CD14-positive monocyte (primary cell): ENCODE measurements at regions of chr3 and their contacts with region 1.

Region 1: DNA sequence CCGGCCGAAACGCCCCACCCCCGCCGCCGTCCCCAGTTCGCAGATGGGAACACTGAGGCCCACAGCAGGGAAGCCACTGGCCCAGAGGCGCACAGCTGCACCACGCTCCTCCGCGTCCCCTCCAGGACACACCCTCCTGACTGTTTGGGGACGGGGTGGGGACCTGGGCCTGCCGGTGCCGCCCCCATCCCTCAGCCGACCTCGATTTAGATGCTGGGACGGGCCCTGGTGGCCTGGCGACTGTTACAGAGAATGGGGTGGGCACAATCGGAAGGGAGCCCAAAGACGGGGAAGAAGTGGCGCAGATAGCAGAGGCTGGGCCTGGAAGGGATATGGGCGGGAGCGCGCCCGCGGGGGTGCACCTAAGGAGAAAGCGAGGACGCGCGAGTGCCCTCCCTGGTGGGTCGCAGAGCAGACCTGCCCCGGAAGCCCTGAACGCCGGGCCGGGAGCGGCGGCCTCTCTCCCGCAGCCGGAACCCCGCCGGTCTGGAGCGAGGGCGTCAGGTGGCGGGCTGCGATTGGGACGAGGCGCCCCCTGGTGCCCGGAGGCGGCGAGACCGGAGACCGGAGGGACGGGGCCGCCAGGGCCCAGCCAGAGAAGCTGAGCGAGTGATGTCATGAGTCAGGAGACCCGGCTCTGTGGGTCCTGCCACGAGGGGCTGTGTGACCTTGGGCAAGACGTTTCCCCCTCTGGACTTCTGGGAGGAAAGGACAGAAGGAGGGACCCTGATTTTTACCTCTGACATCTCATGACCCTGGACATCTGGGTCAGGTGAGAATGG is 78.4 kb downstream of the IQSEC1 start:
- DNase-seq: peak; percentile 77 to 86 (median 80)
- H3K4me3 ChIP-seq: peak overlapping the region; percentile 51 to 91 (median 67)
- H3K4me3 Mint-ChIP-seq: peak overlapping the region; percentile 93 to 95
- H3K27ac ChIP-seq: peak overlapping the region in 1 of 2 donors; percentile 66
- H3K27ac Mint-ChIP-seq: peak overlapping the region; percentile 70 to 91 (median 86)
- H3K4me1 ChIP-seq: peaks cover 65 to 79% of the 10 kb centered on the region in 2 donors
- H3K4me1 Mint-ChIP-seq: peaks cover 81% of the 10 kb centered on the region
- H3K27me3 ChIP-seq: peaks cover 0 to 11% of the 10 kb centered on the region in 2 donors
- H3K27me3 Mint-ChIP-seq: peaks cover 10 to 23% (median 23%) of the 10 kb centered on the region in 3 donors
- CTCF ChIP-seq: peak; percentile 99

Region 2: GRCh38 chr3:12268049-12268735 is 726.6 kb before region 1 on chr3:
- intact Hi-C with region 1: no loop called
- DNase-seq: peak in 2 of 3 donors; percentile 33 to 44
- H3K4me3 ChIP-seq: no peak overlapping the region
- H3K4me3 Mint-ChIP-seq: no peak overlapping the region
- H3K27ac ChIP-seq: peak overlapping the region in 1 of 2 donors; percentile 29
- H3K27ac Mint-ChIP-seq: peak overlapping the region in 3 of 7 donors; percentile 30 to 59 (median 30)
- H3K4me1 ChIP-seq: peaks cover 39 to 60% of the 10 kb centered on the region in 2 donors
- H3K4me1 Mint-ChIP-seq: peaks cover 46% of the 10 kb centered on the region
- H3K27me3 ChIP-seq: no peaks in the 10 kb centered on the region
- H3K27me3 Mint-ChIP-seq: peaks cover 0 to 1% (median 0%) of the 10 kb centered on the region in 3 donors
- CTCF ChIP-seq: no peak

Region 3: DNA sequence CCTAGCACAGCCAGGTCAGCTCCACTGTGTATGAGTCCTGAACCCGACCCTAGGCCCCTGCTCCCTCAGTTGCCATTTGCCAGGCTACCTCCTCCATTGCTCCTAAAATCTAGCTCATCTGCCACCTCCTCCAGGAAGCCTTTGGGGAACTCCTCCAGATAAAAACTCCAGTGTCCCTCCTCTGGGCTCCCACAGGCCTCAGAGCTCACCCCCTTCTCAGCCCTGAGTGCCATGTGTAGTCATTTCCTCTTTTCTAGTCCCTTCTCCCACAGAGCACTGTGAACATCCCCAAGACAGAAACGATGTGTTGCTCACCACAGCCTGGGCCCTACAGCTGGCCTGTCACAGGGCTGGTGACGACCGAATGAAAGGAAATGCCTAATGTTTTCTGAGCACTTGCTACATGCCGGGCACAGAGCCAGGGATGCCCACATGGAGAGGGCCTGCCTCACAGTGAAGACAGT is 17.5 kb after region 1 on chr3:
- intact Hi-C with region 1: loop called (anchors 1 to 2 kb)
- DNase-seq: peak; percentile 98 to 100 (median 98)
- H3K4me3 ChIP-seq: peak overlapping the region in 2 of 3 experiments; percentile 85 to 94
- H3K4me3 Mint-ChIP-seq: peak overlapping the region; percentile 86 to 95
- H3K27ac ChIP-seq: peak overlapping the region; percentile 98 to 100
- H3K27ac Mint-ChIP-seq: peak overlapping the region; percentile 99 to 100 (median 100)
- H3K4me1 ChIP-seq: peaks cover 95 to 100% of the 10 kb centered on the region in 2 donors
- H3K4me1 Mint-ChIP-seq: peaks cover 80% of the 10 kb centered on the region
- H3K27me3 ChIP-seq: no peaks in the 10 kb centered on the region
- H3K27me3 Mint-ChIP-seq: peaks cover 0 to 7% (median 0%) of the 10 kb centered on the region in 3 donors
- CTCF ChIP-seq: no peak

Region 4: GRCh38 chr3:13045904-13046568 is 51.2 kb after region 1 on chr3:
- intact Hi-C with region 1: loop called in 1 of 2 experiments (anchors 10 kb)
- DNase-seq: peak; percentile 81 to 88 (median 86)
- H3K4me3 ChIP-seq: peak overlapping the region in 1 of 3 experiments; percentile 12
- H3K4me3 Mint-ChIP-seq: peak overlapping the region in 1 of 2 donors; percentile 64
- H3K27ac ChIP-seq: peak overlapping the region; percentile 64 to 71
- H3K27ac Mint-ChIP-seq: peak overlapping the region; percentile 87 to 97 (median 94)
- H3K4me1 ChIP-seq: peaks cover 26 to 27% of the 10 kb centered on the region in 2 donors
- H3K4me1 Mint-ChIP-seq: peaks cover 30% of the 10 kb centered on the region
- H3K27me3 ChIP-seq: no peaks in the 10 kb centered on the region
- H3K27me3 Mint-ChIP-seq: peaks cover 3 to 9% (median 7%) of the 10 kb centered on the region in 3 donors
- CTCF ChIP-seq: no peak

Region 5: DNA sequence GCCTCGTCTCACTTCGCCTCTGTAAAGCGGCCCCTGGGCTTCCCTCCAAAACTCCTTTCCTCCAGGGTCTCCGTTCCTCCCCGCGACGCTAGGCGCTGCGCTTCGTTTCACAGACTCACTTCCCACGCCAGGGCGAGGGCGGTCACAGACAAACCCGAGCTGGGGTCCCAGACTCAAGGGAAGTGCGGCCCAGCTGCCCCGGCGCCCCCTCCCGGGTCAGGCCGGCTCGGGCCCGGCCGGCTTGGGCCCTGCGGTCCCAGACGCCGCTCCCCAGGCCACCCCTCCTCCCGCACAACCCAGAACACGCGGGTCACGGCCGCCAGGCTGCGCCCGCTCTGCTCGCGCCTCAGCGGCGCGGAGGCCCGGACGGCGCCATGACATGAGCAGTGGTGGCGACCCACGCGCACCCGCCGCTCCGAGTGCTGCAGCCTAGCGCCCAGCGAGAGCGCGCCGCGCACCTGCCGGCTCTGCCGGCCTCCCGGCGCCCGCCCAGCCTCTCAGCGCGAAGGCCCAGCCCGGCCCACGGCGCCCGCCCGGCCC is 424.8 kb after region 1 on chr3:
- intact Hi-C with region 1: loop called in 1 of 2 experiments (anchors 10 kb)
- DNase-seq: peak; percentile 55 to 63 (median 59)
- H3K4me3 ChIP-seq: peak overlapping the region; percentile 53 to 84 (median 69)
- H3K4me3 Mint-ChIP-seq: peak overlapping the region; percentile 85 to 95
- H3K27ac ChIP-seq: peak overlapping the region; percentile 87 to 95
- H3K27ac Mint-ChIP-seq: peak overlapping the region; percentile 87 to 99 (median 94)
- H3K4me1 ChIP-seq: peaks cover 62 to 65% of the 10 kb centered on the region in 2 donors
- H3K4me1 Mint-ChIP-seq: peaks cover 62% of the 10 kb centered on the region
- H3K27me3 ChIP-seq: no peaks in the 10 kb centered on the region
- H3K27me3 Mint-ChIP-seq: peaks cover 0 to 2% (median 1%) of the 10 kb centered on the region in 3 donors
- CTCF ChIP-seq: no peak